ENCODE measurements at regions of chr9 and their contacts with region 1.

Region 1: DNA sequence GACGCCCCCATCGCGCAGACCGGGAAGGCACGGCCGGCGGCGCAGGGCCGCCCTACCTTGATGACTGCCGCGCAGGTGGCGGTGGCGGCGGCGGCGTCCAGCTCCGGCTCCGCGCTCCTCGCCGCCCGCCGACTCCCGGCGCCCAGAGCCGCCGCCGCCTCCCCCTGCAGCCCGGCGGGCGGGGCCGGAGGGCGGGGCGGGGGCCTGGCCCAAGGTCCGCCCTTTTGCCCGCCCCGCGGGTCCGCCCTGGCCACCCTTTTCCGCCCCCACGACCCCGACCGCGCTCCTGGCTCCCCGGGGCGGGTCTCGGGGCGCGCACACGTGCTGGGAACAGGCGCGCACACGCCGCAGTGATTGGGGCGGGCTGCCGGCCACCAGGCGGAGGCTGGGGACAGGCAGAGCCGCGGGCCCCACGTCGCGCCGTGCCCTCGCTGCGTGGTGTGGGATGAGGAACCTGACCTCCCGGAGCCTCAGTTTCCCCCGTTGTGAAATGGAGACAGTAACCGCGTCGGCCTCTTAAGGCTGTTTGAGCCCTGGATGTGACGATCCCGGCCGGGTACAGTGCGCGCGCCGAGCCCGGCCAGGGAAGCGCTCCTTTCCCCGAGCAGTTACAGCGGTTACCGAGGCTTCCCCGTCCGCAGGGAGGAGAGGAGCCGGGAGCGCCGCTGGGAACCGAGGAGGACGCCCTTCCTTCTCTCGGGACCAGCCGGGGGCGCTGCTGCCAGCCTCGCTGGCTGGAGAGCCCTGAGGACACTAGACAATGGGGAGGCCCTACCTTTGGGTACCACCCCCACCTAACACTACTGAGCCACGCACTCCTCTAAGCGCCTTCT is at the start of gene CORO2A:
- DNase-seq: peak; percentile 85
- H3K4me3 Mint-ChIP-seq: peak within 1 kb of the TSS; percentile 80
- H3K27ac Mint-ChIP-seq: peak within 1 kb of the TSS; percentile 54
- H3K4me1 Mint-ChIP-seq: no peaks in the 10 kb centered on the region
- H3K27me3 Mint-ChIP-seq: no peaks in the 10 kb centered on the region
- CTCF ChIP-seq: peak; percentile 21
- total RNA-seq, gene CORO2A: 24.3 and 30.6 TPM in 2 replicates

Region 2: GRCh38 chr9:97848235-97848581 is 344.5 kb before region 1 on chr9:
- CTCF ChIA-PET with region 1: no interaction called
- intact Hi-C with region 1: no loop called
- DNase-seq: no peak
- H3K4me3 Mint-ChIP-seq: no peak overlapping the region
- H3K27ac Mint-ChIP-seq: no peak overlapping the region
- H3K4me1 Mint-ChIP-seq: no peaks in the 10 kb centered on the region
- H3K27me3 Mint-ChIP-seq: no peaks in the 10 kb centered on the region
- CTCF ChIP-seq: no peak

Region 3: GRCh38 chr9:98118640-98119601 is 73.8 kb before region 1 on chr9 and contains the start of gene TRIM14:
- CTCF ChIA-PET with region 1: interaction called, 6 read pairs
- intact Hi-C with region 1: loop called (anchors 2 kb)
- DNase-seq: peak; percentile 75
- H3K4me3 Mint-ChIP-seq: peak within 1 kb of the TSS; percentile 94
- H3K27ac Mint-ChIP-seq: peak within 1 kb of the TSS; percentile 87
- H3K4me1 Mint-ChIP-seq: peaks cover 27% of the 10 kb centered on the region
- H3K27me3 Mint-ChIP-seq: no peaks in the 10 kb centered on the region
- CTCF ChIP-seq: no peak
- total RNA-seq, gene TRIM14: 34.1 and 54.0 TPM in 2 replicates

Region 4: GRCh38 chr9:98146101-98146991 is 46.4 kb before region 1 on chr9:
- CTCF ChIA-PET with region 1: no interaction called
- intact Hi-C with region 1: loop called (anchors 2 kb)
- DNase-seq: peak; percentile 91
- H3K4me3 Mint-ChIP-seq: peak overlapping the region; percentile 34
- H3K27ac Mint-ChIP-seq: peak overlapping the region; percentile 94
- H3K4me1 Mint-ChIP-seq: peaks cover 67% of the 10 kb centered on the region
- H3K27me3 Mint-ChIP-seq: no peaks in the 10 kb centered on the region
- CTCF ChIP-seq: no peak

Region 5: DNA sequence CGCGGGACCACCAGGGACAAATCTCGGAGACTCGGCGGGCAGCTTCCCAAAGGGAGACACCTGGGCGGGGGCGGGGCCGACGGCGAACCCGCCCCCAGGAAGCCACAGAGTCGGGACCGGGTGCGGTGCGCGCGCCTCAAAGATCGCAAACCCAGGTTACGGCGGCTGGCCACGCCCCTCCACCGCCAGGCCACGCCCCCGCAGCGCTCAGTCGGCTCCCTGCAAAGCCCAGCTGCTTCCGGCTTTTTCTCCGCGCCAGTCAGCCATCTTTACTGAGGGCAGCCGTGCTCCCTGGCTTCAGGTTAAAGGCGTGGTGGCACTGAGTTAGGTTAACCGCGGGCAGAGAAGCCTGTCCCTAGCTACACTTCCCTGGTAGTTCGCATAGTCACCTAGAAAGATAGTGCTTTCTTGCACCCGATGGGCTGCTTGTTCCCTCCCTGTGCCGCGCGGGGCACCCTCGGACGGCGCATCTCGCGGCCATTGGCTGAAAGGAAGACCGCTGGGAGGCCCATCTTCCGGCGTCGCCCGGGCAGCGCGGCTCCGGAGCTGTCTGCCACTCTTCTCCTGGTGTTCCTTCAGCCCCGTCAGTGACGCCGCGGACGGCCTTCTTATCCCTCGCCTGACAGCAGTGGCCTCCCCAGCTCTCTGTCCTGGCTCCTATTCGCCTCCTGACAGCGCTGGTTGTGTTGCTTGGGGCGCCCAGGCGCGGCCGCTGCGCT is 63.0 kb after region 1 on chr9 and contains the start of gene TBC1D2:
- CTCF ChIA-PET with region 1: no interaction called
- intact Hi-C with region 1: loop called (anchors 5 kb)
- DNase-seq: peak; percentile 95
- H3K4me3 Mint-ChIP-seq: peak within 1 kb of the TSS; percentile 82
- H3K27ac Mint-ChIP-seq: peak within 1 kb of the TSS; percentile 92
- H3K4me1 Mint-ChIP-seq: peaks cover 30% of the 10 kb centered on the region
- H3K27me3 Mint-ChIP-seq: no peaks in the 10 kb centered on the region
- CTCF ChIP-seq: no peak
- total RNA-seq, gene TBC1D2: 8.3 TPM in 2 replicates

Measured in Calu3 (cell line).